Astrocyte of the cerebellum (primary cell): ENCODE measurements at regions of chr4 and their contacts with region 1.

Region 1: DNA sequence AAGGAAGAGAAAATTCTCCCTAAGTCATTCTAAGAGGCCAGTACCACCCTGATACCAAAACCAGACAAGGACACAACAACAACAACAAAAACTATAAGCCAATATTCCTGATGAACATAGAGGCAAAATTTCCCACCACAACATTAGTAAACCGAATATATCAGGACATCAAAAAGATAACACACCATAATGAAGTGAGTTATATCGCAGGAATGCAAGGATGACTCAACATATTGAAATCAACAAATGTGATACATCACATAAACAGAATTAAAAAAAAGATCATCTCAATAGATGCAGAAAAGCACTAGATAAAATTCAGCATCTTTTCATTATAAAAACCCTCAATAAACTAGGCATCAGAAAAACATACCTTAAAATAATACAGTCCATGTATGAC is 1844.4 kb upstream of the PCDH10 start:
- DNase-seq: no peak
- H3K4me3 ChIP-seq: no peak overlapping the region
- CTCF ChIP-seq: no peak

Region 2: DNA sequence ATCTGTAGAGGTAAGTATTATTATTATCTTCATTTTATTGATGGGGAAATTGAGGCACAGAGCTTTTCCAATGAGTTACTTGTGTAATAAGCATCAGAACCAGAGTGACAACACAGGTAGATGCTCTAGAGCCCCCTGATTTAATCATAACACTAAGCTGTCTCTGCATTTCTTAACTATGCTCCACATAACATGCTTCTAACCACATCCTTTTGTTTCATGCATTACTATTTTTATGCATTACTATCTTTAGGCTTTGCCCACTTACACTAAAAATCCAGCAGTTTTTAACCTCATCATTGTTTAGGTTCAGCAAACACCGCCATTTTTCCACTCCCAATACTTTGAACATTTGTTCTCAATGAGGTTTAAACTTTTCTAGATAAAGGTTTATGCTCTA is 56.4 kb before region 1 on chr4:
- in situ Hi-C with region 1: no loop called
- DNase-seq: no peak
- H3K4me3 ChIP-seq: no peak overlapping the region
- CTCF ChIP-seq: no peak

Region 3: DNA sequence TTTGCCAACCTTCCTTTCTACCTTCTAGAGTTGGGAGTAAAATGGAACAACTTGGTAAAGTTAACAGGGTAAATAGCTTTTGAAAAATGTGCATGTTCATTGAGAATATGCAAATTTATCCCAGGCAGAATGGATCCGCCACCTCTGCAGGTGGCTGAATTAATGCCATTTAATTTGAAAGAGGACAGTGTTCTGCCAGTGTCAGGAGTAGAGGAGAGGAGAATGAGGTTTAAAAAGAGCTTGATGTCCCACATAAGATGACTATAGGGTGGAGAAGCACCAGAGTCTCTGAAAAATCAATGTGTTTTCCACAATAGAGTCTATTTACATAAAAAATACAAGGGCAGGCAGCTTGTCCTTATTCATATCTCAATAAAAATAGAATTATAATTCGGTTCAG is 40.1 kb after region 1 on chr4:
- in situ Hi-C with region 1: loop called (anchors 5 kb)
- DNase-seq: no peak
- H3K4me3 ChIP-seq: no peak overlapping the region
- CTCF ChIP-seq: no peak

Region 4: DNA sequence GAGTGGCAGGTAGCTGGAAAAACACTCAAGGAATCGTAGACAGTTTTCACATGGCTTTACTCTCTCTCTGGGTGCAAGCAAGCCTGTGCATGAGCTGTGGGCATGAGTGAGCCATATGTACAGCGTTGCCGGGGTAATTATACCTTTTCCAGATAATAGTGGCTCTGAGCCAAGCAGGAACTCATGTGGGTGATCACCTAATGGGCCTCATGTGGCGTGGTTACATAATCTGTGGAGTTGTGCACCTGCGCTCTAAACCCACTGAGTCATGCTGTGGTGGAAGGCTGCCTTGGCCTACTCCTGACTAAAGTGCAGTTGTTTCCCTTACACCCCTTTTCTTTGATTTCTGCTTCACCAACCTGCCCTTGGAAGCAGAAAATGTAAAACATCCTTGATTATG is 279.9 kb after region 1 on chr4:
- in situ Hi-C with region 1: no loop called
- DNase-seq: no peak
- H3K4me3 ChIP-seq: no peak overlapping the region
- CTCF ChIP-seq: no peak